SK-MEL-5 (cell line): ENCODE measurements at regions of chr13 and their contacts with region 1.

Region 1: GRCh38 chr13:35909837-35910540 is 221.2 kb downstream of the DCLK1 start:
- DNase-seq: no peak

Region 2: GRCh38 chr13:35838356-35838755 is 71.6 kb before region 1 on chr13:
- in situ Hi-C with region 1: loop called (anchors 10 kb)
- DNase-seq: no peak